ENCODE measurements at regions of chr20 and their contacts with region 1.

Region 1: DNA sequence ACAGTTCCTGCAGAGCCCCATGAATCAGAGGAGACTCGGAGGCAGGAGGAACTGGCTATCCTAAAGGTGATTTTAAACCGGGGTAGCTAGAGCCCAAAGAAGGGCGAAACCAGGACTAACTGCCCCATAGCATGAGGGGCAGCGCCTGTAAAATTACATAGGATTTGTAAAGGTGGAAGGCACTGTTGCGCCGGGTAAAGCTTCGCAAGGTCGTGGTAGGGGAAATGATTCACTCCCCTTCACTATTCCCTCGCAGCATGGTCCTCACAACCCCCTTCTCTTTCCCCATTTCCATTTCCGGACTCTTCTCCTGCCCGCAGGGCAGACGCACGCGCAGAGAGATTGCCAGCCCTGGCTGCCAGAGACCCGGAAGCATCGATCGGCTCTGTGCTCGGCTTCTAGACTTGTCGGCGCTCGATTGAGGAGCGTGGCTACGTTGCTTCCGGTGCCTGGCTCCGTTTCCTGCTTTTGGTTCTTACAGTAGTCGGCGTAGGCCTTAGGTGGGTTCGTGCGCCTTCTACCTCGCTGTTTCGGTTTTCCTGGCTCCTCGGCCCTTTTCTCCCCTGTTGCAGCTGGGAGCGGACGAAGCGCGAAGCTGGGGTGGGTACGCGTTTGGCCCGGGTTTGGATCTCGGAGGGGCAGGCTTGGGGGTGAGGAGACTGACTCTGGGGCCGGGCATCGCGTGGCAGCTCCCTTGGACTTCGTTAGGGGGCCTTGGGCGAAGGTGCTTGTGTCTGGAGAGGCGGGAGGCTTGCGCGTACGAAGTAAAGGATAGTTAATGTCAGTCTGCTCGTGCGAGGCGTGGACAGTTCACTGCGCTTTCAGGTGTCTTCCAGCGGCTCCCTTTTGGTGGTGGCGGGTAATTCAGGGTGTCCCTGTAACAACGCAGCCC is at the start of gene SNRPB2:
- DNase-seq: peak; percentile 92 to 95
- H3K4me3 ChIP-seq: peak within 1 kb of the TSS; percentile 84 to 99
- H3K27ac ChIP-seq: peak within 1 kb of the TSS; percentile 80 to 86
- H3K4me1 ChIP-seq: peaks cover 0 to 22% (median 11%) of the 10 kb centered on the region in 4 donors
- H3K27me3 ChIP-seq: peaks cover 0 to under 1% of the 10 kb centered on the region in 2 donors
- CTCF ChIP-seq: no peak

Region 2: DNA sequence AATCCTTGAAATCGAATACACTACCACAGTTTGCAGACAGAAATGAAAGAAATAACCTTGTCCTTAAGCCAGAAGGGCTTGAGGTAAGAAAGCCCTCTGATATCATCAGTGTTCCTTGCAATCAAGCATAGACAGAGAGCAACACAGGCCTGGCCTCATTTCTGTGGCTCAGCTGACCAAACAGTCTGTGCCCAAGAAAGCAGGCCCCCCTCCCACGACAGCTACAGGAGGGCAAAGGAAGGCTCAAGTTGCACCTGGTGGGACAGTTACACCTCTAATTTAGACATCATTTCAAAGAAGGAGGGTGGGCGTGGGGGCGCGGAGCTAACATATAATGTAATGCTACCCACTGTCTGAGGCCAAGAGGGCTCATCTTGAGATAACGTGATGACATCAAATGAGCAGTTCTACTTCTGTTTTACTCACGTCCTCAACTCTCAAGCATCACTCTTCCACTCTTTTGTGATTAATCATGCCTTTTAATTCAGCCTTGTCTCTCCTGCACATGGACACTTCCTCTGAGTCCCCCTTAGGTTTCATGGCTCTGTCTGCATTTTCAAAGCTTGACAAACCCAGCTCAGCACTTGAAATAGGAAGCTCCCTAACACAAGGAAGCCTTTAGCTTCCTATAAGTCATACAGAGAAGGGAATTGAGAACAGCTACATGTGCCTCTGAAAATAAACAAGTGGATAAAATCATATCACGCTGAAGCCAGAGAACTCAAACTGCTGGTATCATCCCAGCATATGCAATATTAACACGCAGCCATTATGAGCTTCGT is 178.0 kb before region 1 on chr20:
- intact Hi-C with region 1: no loop called
- DNase-seq: no peak
- H3K4me3 ChIP-seq: no peak overlapping the region
- H3K27ac ChIP-seq: no peak overlapping the region
- H3K4me1 ChIP-seq: peaks cover 0 to 23% (median 7%) of the 10 kb centered on the region in 4 donors
- H3K27me3 ChIP-seq: no peaks in the 10 kb centered on the region
- CTCF ChIP-seq: no peak

Region 3: DNA sequence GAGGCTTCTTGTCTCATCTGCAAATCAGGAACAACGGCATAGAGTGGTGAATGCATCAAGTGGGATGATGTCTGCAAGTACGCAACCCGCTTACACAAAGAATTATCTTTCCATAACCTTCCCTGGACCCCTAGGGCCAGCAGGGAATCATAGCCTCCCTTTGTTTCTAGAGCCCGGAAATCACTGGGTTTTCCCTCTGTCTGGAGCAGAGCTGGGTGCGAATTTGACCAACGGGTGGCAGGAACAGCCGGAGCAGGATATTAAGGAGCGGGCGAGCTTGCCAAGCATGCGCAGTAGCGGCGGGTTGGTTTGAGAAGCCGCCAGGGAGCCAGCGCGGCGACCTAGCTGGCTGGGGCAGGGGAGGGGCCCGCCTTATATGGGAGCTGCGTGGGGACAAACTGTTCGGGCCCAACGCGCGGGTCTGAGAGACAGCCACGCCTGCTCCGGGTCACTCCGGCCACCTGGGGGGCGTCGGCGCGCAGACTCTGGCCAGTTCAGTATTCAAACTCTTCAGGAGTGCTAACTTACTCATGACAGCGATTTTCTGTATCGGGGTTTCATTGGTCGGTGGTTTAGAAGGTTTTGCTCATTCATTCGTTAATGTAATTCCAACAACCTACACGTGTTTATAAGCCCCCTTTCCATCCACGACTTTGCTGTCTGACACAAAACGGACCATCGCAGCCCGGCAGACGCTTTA is 155.0 kb before region 1 on chr20:
- intact Hi-C with region 1: loop called (anchors 5 kb)
- DNase-seq: peak; percentile 87 to 94
- H3K4me3 ChIP-seq: peak overlapping the region; percentile 50 to 66
- H3K27ac ChIP-seq: peak overlapping the region; percentile 50 to 52
- H3K4me1 ChIP-seq: peaks cover 0 to 33% (median 22%) of the 10 kb centered on the region in 4 donors
- H3K27me3 ChIP-seq: no peaks in the 10 kb centered on the region
- CTCF ChIP-seq: no peak